ENCODE measurements at regions of chr15 and their contacts with region 1.

Region 1: GRCh38 chr15:73240866-73241499 is 127.8 kb downstream of the HCN4 start:
- DNase-seq: peak; percentile 67 to 77
- ATAC-seq: no peak
- H3K4me3 ChIP-seq: no peak overlapping the region
- H3K27ac ChIP-seq: no peak overlapping the region
- H3K4me1 ChIP-seq: peaks cover 0 to 3% of the 10 kb centered on the region in 2 donors
- H3K27me3 ChIP-seq: no peaks in the 10 kb centered on the region

Region 2: GRCh38 chr15:72783563-72784237 is 457.3 kb before region 1 on chr15 and contains the start of gene ADPGK:
- intact Hi-C with region 1: loop called in 1 of 2 experiments (anchors 10 kb)
- DNase-seq: peak; percentile 94 to 97
- ATAC-seq: peak; percentile 99
- H3K4me3 ChIP-seq: peak within 1 kb of the TSS; percentile 63 to 75
- H3K27ac ChIP-seq: peak within 1 kb of the TSS; percentile 85 to 97
- H3K4me1 ChIP-seq: peaks cover 0 to 3% of the 10 kb centered on the region in 2 donors
- H3K27me3 ChIP-seq: no peaks in the 10 kb centered on the region
- total RNA-seq, gene ADPGK: 46.9 to 52.1 TPM

Region 3: DNA sequence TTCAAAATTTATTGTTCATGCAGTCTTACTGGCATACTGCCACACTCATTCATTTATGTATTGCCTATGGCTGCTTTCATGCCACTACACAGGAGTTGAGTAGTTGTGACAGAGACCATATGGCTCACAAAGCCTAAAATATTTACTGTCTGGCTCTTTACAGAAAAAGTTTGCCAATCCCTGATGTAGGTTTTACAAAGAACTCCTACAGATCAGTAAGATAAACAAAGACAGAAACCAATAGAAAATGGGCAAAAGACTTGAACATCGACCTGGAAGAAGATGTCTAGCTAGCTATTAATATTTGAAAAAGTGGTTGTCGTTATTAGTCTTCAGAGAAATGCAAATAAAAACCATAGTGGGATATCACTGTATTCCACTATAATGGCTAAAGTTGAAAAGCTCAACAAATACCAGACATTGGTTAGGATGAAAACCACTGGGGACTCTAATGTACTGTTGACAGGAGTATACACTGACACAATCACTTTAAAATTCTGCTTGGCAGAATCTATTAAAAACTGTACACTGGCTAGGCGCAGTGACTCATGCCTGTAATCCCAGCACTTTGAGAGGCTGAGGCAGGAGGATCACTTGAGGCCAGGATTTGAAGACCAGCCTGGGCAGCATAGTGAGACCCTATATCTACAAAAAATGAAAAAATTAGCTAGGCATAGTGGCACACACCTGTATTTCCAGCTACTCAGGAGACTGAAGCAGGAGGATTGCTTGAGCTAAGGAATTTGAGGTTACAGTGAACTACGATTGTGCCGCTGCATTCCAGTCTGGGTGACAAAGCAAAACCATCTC is 101.0 kb before region 1 on chr15:
- intact Hi-C with region 1: loop called (anchors 10 kb)
- DNase-seq: no peak
- ATAC-seq: no peak
- H3K4me3 ChIP-seq: no peak overlapping the region
- H3K27ac ChIP-seq: no peak overlapping the region
- H3K4me1 ChIP-seq: peaks cover 0 to 4% of the 10 kb centered on the region in 2 donors
- H3K27me3 ChIP-seq: no peaks in the 10 kb centered on the region

Region 4: DNA sequence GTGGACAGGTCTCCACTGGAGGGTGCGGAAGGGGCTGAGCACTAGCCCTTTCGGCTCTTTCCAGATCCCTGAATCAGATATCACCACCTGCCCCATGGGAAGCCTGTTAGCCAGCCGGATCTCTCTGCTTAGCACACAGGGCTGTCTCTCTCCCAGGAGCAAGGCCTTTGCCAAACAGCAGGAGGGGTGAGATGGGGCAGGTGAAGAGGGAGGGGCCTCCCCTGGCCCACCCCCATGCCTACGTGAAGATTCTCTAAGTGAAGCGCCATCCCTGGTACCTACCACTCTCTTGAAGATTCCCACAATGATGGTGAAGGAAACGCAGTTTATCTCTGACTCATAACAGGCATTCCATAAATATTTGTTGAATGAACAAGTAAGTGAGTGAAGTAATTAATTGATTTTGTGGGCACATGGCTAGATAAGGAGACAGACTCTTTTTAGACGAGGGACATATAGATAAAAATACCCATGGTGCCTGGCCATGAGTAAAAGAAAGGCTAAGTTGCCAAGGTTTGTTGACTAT is 147.3 kb after region 1 on chr15:
- intact Hi-C with region 1: no loop called
- DNase-seq: no peak
- ATAC-seq: no peak
- H3K4me3 ChIP-seq: no peak overlapping the region
- H3K27ac ChIP-seq: no peak overlapping the region
- H3K4me1 ChIP-seq: no peaks in the 10 kb centered on the region
- H3K27me3 ChIP-seq: no peaks in the 10 kb centered on the region

Measured in aorta (tissue), 5 donors.